Ovary (tissue), 10 donors: ENCODE measurements at regions of chr11 and their contacts with region 1.

Region 1: GRCh38 chr11:130223291-130223971 is 63.8 kb downstream of the ST14 start:
- DNase-seq: no peak
- H3K4me3 ChIP-seq: no peak overlapping the region
- H3K27ac ChIP-seq: no peak overlapping the region
- H3K4me1 ChIP-seq: no peaks in the 10 kb centered on the region
- H3K27me3 ChIP-seq: no peaks in the 10 kb centered on the region
- CTCF ChIP-seq: no peak
- EP300 ChIP-seq: no peak
- POLR2A ChIP-seq: no peak

Region 2: DNA sequence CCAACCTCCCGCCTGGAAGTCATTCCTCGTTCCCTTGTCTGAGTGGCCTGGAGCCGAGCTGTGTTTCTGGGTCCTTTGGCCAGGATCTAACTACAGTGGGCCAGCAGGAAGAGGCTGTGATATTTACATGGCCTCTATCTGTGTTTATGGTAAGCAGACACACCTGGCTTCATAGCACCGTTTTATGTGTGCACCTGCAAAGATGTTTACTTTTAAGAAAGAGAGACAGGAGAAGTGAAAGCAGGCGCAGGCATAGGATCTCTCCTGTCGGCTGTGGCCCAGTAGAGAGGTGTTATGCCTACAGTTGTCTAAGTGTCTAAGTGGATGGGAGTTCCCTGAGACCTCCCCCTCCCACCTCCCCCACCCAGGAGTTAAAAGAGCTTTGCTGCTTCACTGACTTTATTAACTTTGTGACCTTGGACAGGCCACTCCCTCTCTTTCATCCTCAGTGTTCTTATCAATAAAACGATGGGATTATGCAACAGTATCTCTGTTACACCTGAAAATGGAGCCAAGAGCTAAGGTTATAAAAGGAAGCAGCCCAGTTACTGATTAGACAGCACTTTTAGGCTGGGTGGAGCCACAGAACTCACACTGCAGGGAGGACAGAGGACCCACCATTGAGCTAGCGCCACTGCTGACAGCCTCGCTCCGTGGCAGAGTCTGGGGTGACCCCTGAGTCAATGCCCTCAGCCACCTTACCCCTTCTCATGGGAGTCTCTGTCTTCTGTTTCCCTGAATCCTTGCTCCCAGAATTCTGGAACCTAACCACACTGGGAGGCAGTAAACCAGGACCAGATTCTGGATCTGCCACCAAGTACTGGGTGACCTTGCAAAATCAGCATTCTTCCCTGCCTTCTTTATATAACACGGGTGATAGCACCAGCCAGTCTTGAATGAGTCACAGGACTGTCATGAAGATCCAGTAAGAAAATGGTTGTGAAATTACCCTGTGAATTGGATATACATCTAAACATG is 41.8 kb before region 1 on chr11:
- intact Hi-C with region 1: loop called in 1 of 4 experiments (anchors 2 kb)
- DNase-seq: no peak
- H3K4me3 ChIP-seq: no peak overlapping the region
- H3K27ac ChIP-seq: no peak overlapping the region
- H3K4me1 ChIP-seq: peaks cover 6% of the 10 kb centered on the region
- H3K27me3 ChIP-seq: no peaks in the 10 kb centered on the region
- CTCF ChIP-seq: no peak
- EP300 ChIP-seq: no peak
- POLR2A ChIP-seq: no peak

Region 3: GRCh38 chr11:130278151-130278550 is 54.7 kb after region 1 on chr11:
- intact Hi-C with region 1: no loop called
- DNase-seq: no peak
- H3K4me3 ChIP-seq: no peak overlapping the region
- H3K27ac ChIP-seq: no peak overlapping the region
- H3K4me1 ChIP-seq: no peaks in the 10 kb centered on the region
- H3K27me3 ChIP-seq: no peaks in the 10 kb centered on the region
- CTCF ChIP-seq: no peak
- EP300 ChIP-seq: no peak
- POLR2A ChIP-seq: no peak